Activated CD4-positive, alpha-beta T cell treated with anti-CD3 and anti-CD28 coated beads for 36 hours (primary cell): ENCODE measurements at regions of chr11 and their contacts with region 1.

Region 1: GRCh38 chr11:60913793-60914632 is at the start of gene TMEM109:
- DNase-seq: peak; percentile 93
- ATAC-seq: peak; percentile 78
- H3K4me3 Mint-ChIP-seq: peak within 1 kb of the TSS; percentile 87
- H3K27ac Mint-ChIP-seq: peak within 1 kb of the TSS; percentile 97
- H3K4me1 Mint-ChIP-seq: peaks cover 58% of the 10 kb centered on the region
- H3K27me3 Mint-ChIP-seq: no peaks in the 10 kb centered on the region
- total RNA-seq, gene TMEM109: 80.3 to 89.1 TPM

Region 2: DNA sequence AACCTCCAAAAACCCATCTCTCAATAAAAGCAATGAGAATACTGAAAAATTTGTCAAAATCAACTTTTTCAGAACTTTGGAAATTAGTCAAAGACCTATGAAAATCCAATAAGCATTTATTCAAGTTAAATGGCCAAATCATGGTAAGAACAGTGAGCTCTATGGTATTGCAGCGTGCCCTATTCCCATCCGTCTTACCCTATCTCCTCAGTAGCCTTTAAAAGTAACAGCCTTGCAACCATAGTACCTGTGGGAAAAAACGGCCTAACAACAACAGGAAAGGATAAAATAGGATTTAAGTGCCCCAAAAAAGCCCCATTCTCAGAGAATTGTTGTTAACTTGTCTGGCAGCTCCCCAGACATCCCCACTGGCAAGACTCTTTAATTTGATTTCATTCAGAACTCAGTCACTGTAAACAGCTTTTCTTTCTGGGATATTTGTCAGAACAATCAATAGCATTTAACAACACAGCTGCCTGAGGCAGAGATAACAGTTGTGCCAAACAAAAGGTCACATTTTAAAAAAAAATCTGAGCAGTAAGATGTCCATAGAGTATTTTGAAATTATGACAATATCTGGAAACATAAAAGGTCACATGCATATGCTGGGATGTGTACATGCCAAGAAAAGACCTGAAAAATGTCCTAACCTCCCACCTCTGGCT is 233.4 kb before region 1 on chr11:
- CTCF ChIA-PET with region 1: no interaction called
- POLR2A ChIA-PET with region 1: no interaction called
- intact Hi-C with region 1: no loop called
- DNase-seq: no peak
- ATAC-seq: no peak
- H3K4me3 Mint-ChIP-seq: no peak overlapping the region
- H3K27ac Mint-ChIP-seq: no peak overlapping the region
- H3K4me1 Mint-ChIP-seq: no peaks in the 10 kb centered on the region
- H3K27me3 Mint-ChIP-seq: peaks cover 20% of the 10 kb centered on the region

Region 3: DNA sequence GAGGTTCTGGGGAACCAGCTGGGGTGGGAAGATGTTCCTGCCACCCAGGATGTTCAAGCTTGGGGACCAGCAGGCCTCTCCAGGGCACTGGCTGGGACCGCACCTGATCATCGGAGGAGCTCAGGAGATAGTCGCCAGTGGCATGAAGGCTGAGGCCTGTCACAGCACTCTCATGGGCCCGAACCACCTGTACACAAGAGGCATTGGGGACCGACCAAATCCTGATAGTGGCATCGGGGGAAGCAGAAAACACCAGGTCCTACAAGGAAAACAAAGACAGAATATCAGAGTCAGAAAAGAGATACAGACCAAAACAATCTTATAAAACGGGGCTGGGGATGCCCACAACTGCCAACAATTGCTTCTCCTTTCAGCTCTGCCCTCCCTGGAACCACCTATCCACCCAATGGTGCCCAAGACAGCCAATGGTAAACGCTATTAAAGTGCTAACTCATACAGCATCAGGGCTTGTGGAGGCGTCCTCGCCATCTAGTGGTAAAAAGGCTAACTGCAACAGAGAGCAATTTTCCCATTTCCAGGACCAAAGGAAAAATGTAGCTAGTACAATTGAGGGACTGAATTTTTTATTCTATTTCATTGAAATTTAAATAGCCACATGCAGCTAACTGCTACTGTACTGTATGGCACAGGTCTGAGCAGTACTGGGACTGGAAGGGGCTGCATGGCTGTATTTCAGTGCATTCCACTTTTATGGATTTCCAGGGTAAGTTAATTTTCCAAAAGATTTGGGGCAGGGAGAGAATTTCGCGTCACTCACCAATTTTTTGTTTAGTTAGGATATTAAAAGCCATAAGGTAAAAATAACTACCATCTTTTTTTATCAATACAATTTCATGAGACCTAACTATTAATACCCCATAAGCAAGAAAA is 14.7 kb before region 1 on chr11:
- CTCF ChIA-PET with region 1: interaction called, 16 read pairs
- POLR2A ChIA-PET with region 1: interaction called, 3 read pairs
- intact Hi-C with region 1: no loop called
- DNase-seq: peak; percentile 32
- ATAC-seq: peak; percentile 87
- H3K4me3 Mint-ChIP-seq: no peak overlapping the region
- H3K27ac Mint-ChIP-seq: no peak overlapping the region
- H3K4me1 Mint-ChIP-seq: peaks cover 12% of the 10 kb centered on the region
- H3K27me3 Mint-ChIP-seq: no peaks in the 10 kb centered on the region

Region 4: GRCh38 chr11:60970369-60970774 is 56.4 kb after region 1 on chr11:
- CTCF ChIA-PET with region 1: interaction called, 4 read pairs
- POLR2A ChIA-PET with region 1: no interaction called
- intact Hi-C with region 1: loop called in 1 of 2 experiments (anchors 1 kb)
- DNase-seq: peak; percentile 91
- ATAC-seq: peak; percentile 51
- H3K4me3 Mint-ChIP-seq: peak overlapping the region; percentile 87
- H3K27ac Mint-ChIP-seq: peak overlapping the region; percentile 98
- H3K4me1 Mint-ChIP-seq: peaks cover 16% of the 10 kb centered on the region
- H3K27me3 Mint-ChIP-seq: peaks cover 2% of the 10 kb centered on the region

Region 5: GRCh38 chr11:61071208-61071681 is 157.2 kb after region 1 on chr11:
- CTCF ChIA-PET with region 1: no interaction called
- POLR2A ChIA-PET with region 1: no interaction called
- intact Hi-C with region 1: no loop called
- DNase-seq: peak; percentile 78
- ATAC-seq: peak; percentile 87
- H3K4me3 Mint-ChIP-seq: peak overlapping the region; percentile 59
- H3K27ac Mint-ChIP-seq: peak overlapping the region; percentile 93
- H3K4me1 Mint-ChIP-seq: peaks cover 95% of the 10 kb centered on the region
- H3K27me3 Mint-ChIP-seq: no peaks in the 10 kb centered on the region

Region 6: GRCh38 chr11:61083601-61084147 is 169.7 kb after region 1 on chr11:
- CTCF ChIA-PET with region 1: no interaction called
- POLR2A ChIA-PET with region 1: no interaction called
- intact Hi-C with region 1: loop called in 1 of 2 experiments (anchors 5 kb)
- DNase-seq: peak; percentile 86
- ATAC-seq: peak; percentile 66
- H3K4me3 Mint-ChIP-seq: peak overlapping the region; percentile 87
- H3K27ac Mint-ChIP-seq: peak overlapping the region; percentile 99
- H3K4me1 Mint-ChIP-seq: peaks cover 64% of the 10 kb centered on the region
- H3K27me3 Mint-ChIP-seq: no peaks in the 10 kb centered on the region

Region 7: DNA sequence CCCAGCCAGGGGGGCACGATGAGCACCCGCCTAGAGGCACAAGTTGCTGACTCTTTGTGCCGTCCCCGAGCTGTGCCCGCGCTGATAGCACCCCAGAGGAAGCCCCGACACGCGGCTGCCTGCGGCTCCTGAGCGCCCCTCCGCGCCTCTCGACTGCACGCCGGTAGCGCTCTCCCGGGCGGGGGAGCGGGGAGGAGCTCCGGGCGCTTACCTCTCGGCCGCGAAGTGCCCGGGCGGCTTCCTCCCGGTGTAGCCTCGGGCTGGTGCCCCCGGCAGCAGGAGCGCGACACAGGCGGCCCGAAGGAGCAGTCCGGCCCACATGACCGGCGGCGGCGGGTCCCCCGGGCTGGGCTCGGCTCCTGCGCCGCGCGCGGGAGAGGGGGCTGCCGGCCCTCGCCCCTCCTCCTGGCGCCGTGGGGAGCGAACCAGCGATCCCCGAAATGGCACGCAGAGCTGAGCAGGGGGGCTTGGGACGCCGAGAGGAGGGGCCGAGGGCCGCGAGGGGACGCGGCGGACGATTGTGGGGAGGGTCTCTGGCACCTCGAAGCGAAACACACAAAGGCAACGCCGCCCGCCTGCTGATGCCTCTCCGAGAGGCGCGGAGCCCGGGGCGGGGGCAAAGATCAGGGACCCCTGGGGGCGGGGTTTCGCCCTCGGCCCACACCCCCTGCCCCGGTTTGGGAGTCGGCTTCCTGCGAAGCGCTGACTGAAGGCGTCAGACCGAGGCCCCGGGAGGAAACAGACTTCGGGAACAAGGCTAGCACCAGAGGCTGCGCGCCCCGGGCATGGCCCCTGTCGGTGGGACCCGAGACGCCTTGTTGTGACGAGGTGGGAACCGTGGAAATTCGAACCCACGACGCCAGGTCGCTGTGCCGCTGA is 380.9 kb after region 1 on chr11 and contains the start of gene VWCE:
- CTCF ChIA-PET with region 1: interaction called, 3 read pairs
- POLR2A ChIA-PET with region 1: no interaction called
- intact Hi-C with region 1: loop called in 1 of 2 experiments (anchors 5 kb)
- DNase-seq: peak; percentile 89
- ATAC-seq: peak; percentile 90
- H3K4me3 Mint-ChIP-seq: peak within 1 kb of the TSS; percentile 80
- H3K27ac Mint-ChIP-seq: peak within 1 kb of the TSS; percentile 72
- H3K4me1 Mint-ChIP-seq: peaks cover 33% of the 10 kb centered on the region
- H3K27me3 Mint-ChIP-seq: peaks cover 14% of the 10 kb centered on the region
- total RNA-seq, gene VWCE: 5.2 to 6.8 TPM